ENCODE measurements at regions of chr6 and their contacts with region 1.

Region 1: DNA sequence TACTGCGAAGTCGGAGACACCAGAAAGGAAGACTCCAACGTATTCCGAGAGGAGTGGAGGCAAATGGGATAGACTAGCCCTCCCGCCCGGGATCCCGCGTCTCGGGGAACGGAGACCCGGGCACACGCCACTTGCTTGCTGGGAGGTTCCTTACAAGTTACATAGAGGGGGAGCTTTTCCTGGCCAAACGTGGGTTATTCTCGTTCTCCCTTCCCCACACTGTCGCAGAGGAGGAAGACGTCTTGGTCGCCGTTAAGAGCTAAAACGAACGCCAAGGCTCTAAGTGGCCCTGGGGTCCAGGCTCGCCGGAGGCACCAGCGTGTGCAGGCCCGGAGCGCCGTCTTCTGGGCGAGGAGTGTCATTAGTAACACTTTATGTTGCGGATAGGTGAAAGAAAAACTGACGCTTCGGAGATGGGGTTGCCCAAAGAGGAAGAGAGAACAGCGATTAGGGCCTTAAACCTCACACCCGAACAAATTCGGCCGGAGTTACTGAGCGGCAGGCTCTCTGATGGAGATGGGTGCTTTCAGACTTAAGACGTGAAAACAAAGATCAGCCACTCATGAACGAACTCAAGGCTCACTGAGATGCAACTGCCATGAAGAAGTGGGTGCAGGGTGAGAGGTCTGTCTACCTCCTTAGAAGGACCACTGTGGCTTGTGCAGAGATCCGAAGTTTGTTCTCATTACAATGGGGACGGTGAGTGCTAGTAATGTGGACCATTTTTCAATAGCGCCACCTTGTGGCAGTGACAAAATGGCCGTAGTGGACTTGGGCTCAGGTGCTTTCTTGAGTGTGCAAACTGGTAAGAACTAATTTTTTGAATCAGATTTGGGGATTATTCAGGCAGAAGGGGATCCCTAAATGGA is 11.7 kb upstream of the ZNF311 start:
- DNase-seq: peak; percentile 76
- H3K4me3 Mint-ChIP-seq: peak overlapping the region; percentile 87
- H3K27ac Mint-ChIP-seq: peak overlapping the region; percentile 89
- H3K4me1 Mint-ChIP-seq: peaks cover 22% of the 10 kb centered on the region
- H3K27me3 Mint-ChIP-seq: peaks cover 22% of the 10 kb centered on the region

Region 2: DNA sequence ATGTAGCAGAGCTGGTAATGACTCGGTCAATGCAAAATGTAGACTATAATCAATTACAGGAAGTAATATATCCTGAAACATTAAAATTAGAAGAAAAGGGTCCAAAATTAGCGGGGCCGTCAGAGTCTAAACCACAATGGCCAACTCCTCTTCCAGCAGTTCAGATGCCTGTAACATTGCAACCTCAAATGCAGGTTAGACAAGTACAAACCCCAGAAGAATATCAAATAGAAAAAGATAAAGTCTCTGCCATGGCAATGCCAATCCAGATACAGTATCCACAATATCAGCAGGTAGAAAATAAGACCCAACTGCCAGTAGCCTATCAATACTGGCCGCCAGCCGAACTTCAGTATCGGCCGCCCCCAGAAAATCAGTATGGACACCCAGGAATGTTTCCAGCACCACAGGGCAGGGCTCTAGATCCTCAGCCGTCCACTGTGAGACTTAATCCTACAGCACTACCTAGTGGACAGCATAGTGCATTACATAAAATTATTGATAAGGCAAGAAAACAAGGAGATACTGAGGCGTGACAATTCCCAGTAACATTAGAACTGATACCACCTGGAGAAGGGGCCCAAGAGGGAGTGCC is 332.8 kb before region 1 on chr6:
- intact Hi-C with region 1: loop called (anchors 1 kb)
- DNase-seq: no peak
- H3K4me3 Mint-ChIP-seq: no peak overlapping the region
- H3K27ac Mint-ChIP-seq: no peak overlapping the region
- H3K4me1 Mint-ChIP-seq: peaks cover 19% of the 10 kb centered on the region
- H3K27me3 Mint-ChIP-seq: peaks cover 65% of the 10 kb centered on the region

Region 3: GRCh38 chr6:28895134-28895812 is 121.5 kb before region 1 on chr6:
- intact Hi-C with region 1: loop called (anchors 1 kb)
- DNase-seq: peak; percentile 89
- H3K4me3 Mint-ChIP-seq: peak overlapping the region; percentile 90
- H3K27ac Mint-ChIP-seq: peak overlapping the region; percentile 100
- H3K4me1 Mint-ChIP-seq: peaks cover 25% of the 10 kb centered on the region
- H3K27me3 Mint-ChIP-seq: peaks cover 6% of the 10 kb centered on the region

Region 4: DNA sequence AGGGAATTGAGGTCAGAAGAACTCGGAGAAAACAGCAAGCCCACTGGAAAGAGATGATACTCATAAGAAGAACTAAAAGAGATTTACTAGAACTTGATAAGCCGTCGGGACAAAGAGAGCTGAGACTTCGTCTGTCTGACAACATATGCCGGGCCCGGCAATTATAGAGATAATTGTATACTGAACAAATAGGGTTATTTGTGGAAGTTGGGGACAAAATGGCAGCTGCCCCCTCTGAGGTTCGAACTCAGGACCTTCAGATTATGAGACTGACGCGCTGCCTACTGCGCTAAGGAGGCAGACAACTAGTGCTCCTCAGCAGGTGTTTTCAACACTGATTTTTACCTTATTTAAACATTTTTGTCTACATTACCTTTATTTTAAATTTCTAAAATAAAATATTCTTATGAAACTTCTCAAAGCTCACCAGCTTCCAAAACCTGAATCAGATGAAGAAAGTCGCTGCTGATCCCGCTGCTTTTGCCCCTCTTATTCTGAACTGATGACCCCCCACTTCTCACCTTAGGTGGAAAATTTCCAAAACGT is 63.7 kb before region 1 on chr6:
- intact Hi-C with region 1: loop called (anchors 1 kb)
- DNase-seq: peak; percentile 28
- H3K4me3 Mint-ChIP-seq: peak overlapping the region; percentile 81
- H3K27ac Mint-ChIP-seq: peak overlapping the region; percentile 74
- H3K4me1 Mint-ChIP-seq: peaks cover 30% of the 10 kb centered on the region
- H3K27me3 Mint-ChIP-seq: peaks cover 14% of the 10 kb centered on the region

Region 5: GRCh38 chr6:29005183-29005885 is 11.5 kb before region 1 on chr6 and contains the start of gene ZNF311:
- intact Hi-C with region 1: loop called (anchors 1 kb)
- DNase-seq: peak; percentile 37
- H3K4me3 Mint-ChIP-seq: peak within 1 kb of the TSS; percentile 84
- H3K27ac Mint-ChIP-seq: peak within 1 kb of the TSS; percentile 59
- H3K4me1 Mint-ChIP-seq: peaks cover 25% of the 10 kb centered on the region
- H3K27me3 Mint-ChIP-seq: peaks cover 7% of the 10 kb centered on the region
- total RNA-seq, gene ZNF311: 0.64 and 0.80 TPM in 2 replicates

Region 6: GRCh38 chr6:29649701-29650673 is 633.2 kb after region 1 on chr6:
- intact Hi-C with region 1: loop called (anchors 1 kb)
- DNase-seq: peak; percentile 95
- H3K4me3 Mint-ChIP-seq: peak overlapping the region; percentile 89
- H3K27ac Mint-ChIP-seq: peak overlapping the region; percentile 98
- H3K4me1 Mint-ChIP-seq: peaks cover 20% of the 10 kb centered on the region
- H3K27me3 Mint-ChIP-seq: peaks cover 5% of the 10 kb centered on the region

Region 7: DNA sequence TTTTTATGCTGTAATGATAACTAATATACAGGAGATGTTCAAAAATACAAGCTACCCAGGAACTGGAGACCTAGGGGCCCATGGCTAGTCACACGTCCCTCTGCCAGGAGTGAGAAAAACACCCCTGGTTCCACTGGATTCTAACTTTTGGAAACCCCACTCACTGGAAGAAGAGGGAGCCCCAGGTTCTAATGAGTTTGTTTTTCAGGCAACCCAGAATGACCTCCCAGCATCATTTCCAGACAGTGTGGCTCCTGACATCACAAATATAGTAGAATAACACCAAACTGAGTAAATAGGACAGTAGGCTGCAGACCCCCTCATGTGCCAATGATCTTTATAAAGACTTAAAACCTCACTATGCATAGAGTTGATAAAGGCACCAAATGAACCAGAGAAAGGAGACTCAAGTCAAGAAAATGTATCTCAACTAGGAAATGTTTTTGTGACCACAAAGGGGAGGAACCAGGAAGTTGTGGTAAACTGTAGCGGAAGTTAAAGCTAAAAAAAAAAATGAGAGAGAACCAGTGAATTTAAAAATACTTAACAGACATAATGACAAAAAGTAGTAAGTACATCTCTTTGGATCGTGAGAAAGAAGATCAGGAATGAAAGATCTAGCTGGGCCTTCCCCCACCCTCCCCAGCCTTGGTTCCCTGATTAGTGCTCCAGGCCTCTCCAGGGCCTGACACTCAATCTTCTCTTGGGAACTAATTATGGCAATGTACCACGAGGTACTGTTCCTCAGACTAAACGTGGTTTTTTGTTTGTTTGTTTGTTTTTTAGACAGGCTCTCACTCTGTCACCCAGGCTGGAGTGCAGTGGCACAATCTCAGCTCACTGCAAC is 1492.3 kb after region 1 on chr6:
- intact Hi-C with region 1: no loop called
- DNase-seq: peak; percentile 53
- H3K4me3 Mint-ChIP-seq: peak overlapping the region; percentile 19
- H3K27ac Mint-ChIP-seq: peak overlapping the region; percentile 93
- H3K4me1 Mint-ChIP-seq: peaks cover 47% of the 10 kb centered on the region
- H3K27me3 Mint-ChIP-seq: no peaks in the 10 kb centered on the region